ENCODE measurements at regions of chr12 and their contacts with region 1.

Region 1: GRCh38 chr12:56104109-56104814 is at the start of gene PA2G4:
- DNase-seq: peak; percentile 99
- H3K4me3 ChIP-seq: peak within 1 kb of the TSS; percentile 67 to 91 (median 78)
- H3K27ac ChIP-seq: peak within 1 kb of the TSS; percentile 84 to 93 (median 86)
- H3K4me1 ChIP-seq: peaks cover 0 to 27% (median 21%) of the 10 kb centered on the region in 4 donors
- H3K27me3 ChIP-seq: no peaks in the 10 kb centered on the region
- CTCF ChIP-seq: no peak
- EP300 ChIP-seq: peak in 1 of 4 donors; percentile 25
- POLR2A ChIP-seq: peak; percentile 70 to 87
- total RNA-seq, gene PA2G4: 52.9 to 157 (median 110) TPM

Region 2: GRCh38 chr12:55996715-55997534 is 107.3 kb before region 1 on chr12 and contains the start of gene SUOX:
- intact Hi-C with region 1: loop called (anchors 5 kb)
- DNase-seq: peak; percentile 99
- H3K4me3 ChIP-seq: peak within 1 kb of the TSS; percentile 42 to 76 (median 72)
- H3K27ac ChIP-seq: peak within 1 kb of the TSS; percentile 84 to 91 (median 89)
- H3K4me1 ChIP-seq: peaks cover 0 to 19% (median 16%) of the 10 kb centered on the region in 4 donors
- H3K27me3 ChIP-seq: no peaks in the 10 kb centered on the region
- CTCF ChIP-seq: no peak
- EP300 ChIP-seq: no peak
- POLR2A ChIP-seq: peak in 1 of 2 donors; percentile 54
- total RNA-seq, gene SUOX: 20.9 to 51.0 (median 25.4) TPM

Region 3: DNA sequence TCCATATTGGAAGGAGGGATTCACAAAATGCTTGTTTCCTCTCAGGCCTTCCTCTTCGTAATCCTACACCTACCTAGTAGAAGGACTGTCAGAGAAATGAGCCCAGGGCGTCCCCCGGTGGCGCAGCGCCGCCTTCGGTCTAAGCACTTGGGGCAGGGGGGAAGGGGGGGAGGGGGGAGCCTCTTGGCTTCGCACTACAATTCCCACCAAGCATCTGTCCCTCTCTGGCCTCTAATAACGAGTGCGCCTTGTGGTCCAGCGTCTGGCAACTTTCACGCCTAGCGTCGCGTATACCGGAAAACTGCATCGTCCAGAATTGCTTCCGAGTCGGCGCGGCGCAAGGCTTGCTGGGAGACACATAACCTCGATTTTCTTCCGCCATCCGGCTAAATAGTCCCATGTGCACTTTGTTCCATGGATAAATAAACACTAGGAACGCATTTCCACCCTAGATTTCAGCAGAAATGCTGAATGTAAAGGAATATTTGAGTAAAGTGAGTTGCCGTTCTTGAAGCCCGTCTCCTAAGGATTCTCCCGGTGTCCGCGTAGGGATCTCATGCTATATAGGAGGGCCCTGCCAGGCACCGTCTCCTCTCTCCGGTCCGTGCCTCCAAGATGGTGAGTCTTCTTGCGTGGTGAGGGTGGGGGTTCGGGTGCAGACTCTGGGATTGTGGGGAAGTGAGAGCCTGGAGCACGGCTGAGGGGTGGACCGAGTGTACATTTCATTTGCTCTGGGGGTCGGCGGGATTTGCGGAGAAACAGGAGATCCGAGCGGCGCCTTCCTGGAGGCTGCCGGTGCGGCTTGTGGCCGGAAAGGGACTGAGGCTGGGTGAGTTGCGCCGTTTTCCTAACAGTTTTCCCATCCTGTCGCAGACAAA is 62.5 kb before region 1 on chr12 and contains the start of gene RPS26:
- intact Hi-C with region 1: loop called (anchors 1 kb)
- DNase-seq: peak; percentile 98
- H3K4me3 ChIP-seq: peak within 1 kb of the TSS; percentile 56 to 94 (median 72)
- H3K27ac ChIP-seq: peak within 1 kb of the TSS; percentile 91 to 96 (median 94)
- H3K4me1 ChIP-seq: peaks cover 0 to 20% (median 19%) of the 10 kb centered on the region in 4 donors
- H3K27me3 ChIP-seq: no peaks in the 10 kb centered on the region
- CTCF ChIP-seq: peak in 1 of 4 experiments; percentile 40
- EP300 ChIP-seq: peak in 2 of 4 donors; percentile 32 to 52
- POLR2A ChIP-seq: peak; percentile 97
- total RNA-seq, gene RPS26: 130 to 3,746 (median 1,580) TPM

Region 4: DNA sequence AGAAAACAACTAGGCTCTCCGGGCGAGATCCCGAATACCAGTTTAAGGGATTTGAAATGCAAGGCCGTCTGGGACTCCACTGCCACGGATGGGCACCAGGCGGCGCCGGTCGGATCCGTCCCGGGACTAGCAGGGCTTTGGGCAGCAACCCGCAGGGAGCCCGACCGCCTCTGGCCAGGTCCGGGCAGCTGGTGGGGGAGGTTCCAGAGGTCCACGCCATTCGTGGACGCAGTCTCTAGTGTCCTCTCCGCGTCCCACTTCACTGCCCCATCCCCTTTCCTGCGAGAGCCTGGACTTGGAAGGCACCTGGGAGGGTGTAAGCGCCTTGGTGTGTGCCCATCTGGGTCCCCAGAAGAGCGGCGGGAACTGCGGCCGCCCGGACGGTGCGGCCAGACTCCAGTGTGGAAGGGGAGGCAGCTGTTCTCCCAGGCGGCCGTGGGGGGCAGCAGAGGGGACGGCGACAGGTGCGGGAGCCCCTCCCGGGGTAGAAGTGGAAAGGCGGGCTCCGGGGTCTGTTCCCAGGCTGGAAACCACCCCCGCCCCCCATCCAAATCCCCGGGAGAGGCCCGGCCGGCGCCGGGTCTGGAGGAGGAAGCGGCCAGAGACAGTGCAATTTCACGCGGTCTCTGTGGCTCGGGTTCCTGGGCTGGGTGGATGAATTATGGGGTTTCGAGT is 25.1 kb before region 1 on chr12:
- intact Hi-C with region 1: loop called (anchors 1 kb)
- DNase-seq: peak; percentile 93
- H3K4me3 ChIP-seq: peak overlapping the region; percentile 37 to 58 (median 46)
- H3K27ac ChIP-seq: peak overlapping the region; percentile 59 to 79 (median 76)
- H3K4me1 ChIP-seq: peaks cover 0 to 22% (median 18%) of the 10 kb centered on the region in 4 donors
- H3K27me3 ChIP-seq: peaks cover 0 to 14% (median 3%) of the 10 kb centered on the region in 3 donors
- CTCF ChIP-seq: peak; percentile 57 to 81 (median 76)
- EP300 ChIP-seq: no peak
- POLR2A ChIP-seq: no peak

Region 5: GRCh38 chr12:56157201-56158028 is 53.2 kb after region 1 on chr12:
- intact Hi-C with region 1: no loop called
- DNase-seq: peak; percentile 94
- H3K4me3 ChIP-seq: peak overlapping the region; percentile 61 to 99 (median 78)
- H3K27ac ChIP-seq: peak overlapping the region; percentile 93 to 99 (median 94)
- H3K4me1 ChIP-seq: peaks cover 0 to 58% (median 43%) of the 10 kb centered on the region in 4 donors
- H3K27me3 ChIP-seq: no peaks in the 10 kb centered on the region
- CTCF ChIP-seq: peak in 3 of 4 experiments; percentile 74 to 95 (median 91)
- EP300 ChIP-seq: no peak
- POLR2A ChIP-seq: peak; percentile 50 to 69